SK-N-SH (cell line): ENCODE measurements at regions of chr1 and their contacts with region 1.

Region 1: GRCh38 chr1:236907205-236907604 is 97.0 kb downstream of the MT1HL1 start:
- DNase-seq: peak; percentile 76
- H3K4me3 ChIP-seq: no peak overlapping the region
- H3K27ac ChIP-seq: peak overlapping the region in 1 of 2 experiments; percentile 93; a peak in 2 of 4 replicates
- H3K4me1 ChIP-seq: peaks cover 0 to 14% of the 10 kb centered on the region in 2 experiments; a peak in 2 of 4 replicates
- H3K27me3 ChIP-seq: no peaks in the 10 kb centered on the region
- CTCF ChIP-seq: no peak
- EP300 ChIP-seq: peak in 1 of 2 experiments; percentile 85; a peak in 2 of 4 replicates
- RAD21 ChIP-seq: peak; percentile 62

Region 2: DNA sequence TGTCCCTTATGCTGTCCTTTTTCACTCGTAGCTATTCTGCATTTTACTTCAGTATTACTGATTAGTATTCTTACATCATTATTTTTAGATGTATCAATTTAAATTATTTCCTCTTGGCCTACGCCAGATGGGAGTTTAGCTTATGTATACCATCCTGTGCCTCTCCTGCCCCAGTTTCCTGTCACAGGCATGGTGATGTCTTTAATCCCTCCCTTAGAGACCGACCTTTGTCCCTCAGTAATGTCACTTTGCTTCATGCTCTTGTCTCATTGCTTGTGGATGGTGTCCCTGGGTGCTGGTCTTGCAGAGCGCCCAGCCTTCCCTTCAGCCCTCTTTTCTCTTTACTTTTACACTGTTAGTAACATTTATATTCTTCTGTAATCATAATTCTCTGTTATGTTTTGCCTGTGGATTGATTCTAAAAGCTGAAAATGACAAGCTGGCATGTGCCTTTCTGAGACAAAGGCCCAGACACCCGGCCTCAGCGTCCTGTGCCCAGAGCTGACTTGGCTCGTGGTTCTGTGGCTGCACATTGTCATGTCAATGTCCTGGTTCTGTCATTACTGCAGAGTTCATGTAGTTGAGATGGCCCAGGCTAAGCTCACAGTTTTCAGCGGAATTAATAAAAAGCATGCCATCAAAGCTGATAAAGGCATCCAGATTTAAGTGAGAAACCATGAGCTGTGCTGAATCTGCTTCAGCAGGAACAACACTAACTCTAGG is 11.4 kb before region 1 on chr1:
- CTCF ChIA-PET with region 1: interaction called, 7 read pairs
- POLR2A ChIA-PET with region 1: interaction called, 11 read pairs
- DNase-seq: peak; percentile 70
- H3K4me3 ChIP-seq: no peak overlapping the region
- H3K27ac ChIP-seq: peak overlapping the region in 1 of 2 experiments; percentile 97; a peak in 2 of 4 replicates
- H3K4me1 ChIP-seq: peaks cover 0 to 47% of the 10 kb centered on the region in 2 experiments; a peak in 2 of 4 replicates
- H3K27me3 ChIP-seq: no peaks in the 10 kb centered on the region
- CTCF ChIP-seq: no peak
- EP300 ChIP-seq: peak in 1 of 2 experiments; percentile 90; a peak in 2 of 4 replicates
- RAD21 ChIP-seq: peak; percentile 9; the same call in 1 of the 2 replicates